Activated CD4-positive, alpha-beta memory T cell treated with anti-CD3 and anti-CD28 coated beads for 36 hours (primary cell): ENCODE measurements at regions of chr4 and their contacts with region 1.

Region 1: GRCh38 chr4:10239982-10240654 is 123.5 kb upstream of the WDR1 start:
- DNase-seq: no peak
- H3K4me3 Mint-ChIP-seq: no peak overlapping the region
- H3K27ac Mint-ChIP-seq: no peak overlapping the region
- H3K4me1 Mint-ChIP-seq: no peaks in the 10 kb centered on the region
- H3K27me3 Mint-ChIP-seq: no peaks in the 10 kb centered on the region

Region 2: DNA sequence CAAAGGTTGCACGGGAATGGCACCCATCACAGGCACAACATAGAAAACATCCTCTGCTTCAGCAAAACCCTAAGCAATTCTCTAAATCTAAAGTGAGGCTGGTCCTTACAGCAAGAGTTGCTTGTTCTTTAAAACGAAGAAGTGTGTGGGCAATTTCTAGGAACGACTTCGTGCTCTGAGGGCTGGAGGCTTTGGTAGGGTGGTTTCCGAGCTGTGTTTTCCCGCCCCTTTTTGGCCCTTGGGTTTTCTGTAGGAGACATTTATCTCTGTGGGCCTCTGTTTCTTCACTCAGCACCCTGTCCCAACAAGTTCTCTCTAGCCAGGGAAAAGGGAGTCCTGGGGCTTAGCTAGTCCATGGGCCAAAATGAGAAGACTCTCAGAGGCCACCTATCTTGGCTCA is 303.0 kb before region 1 on chr4:
- CTCF ChIA-PET with region 1: no interaction called
- POLR2A ChIA-PET with region 1: no interaction called
- intact Hi-C with region 1: no loop called
- DNase-seq: peak; percentile 12
- H3K4me3 Mint-ChIP-seq: no peak overlapping the region
- H3K27ac Mint-ChIP-seq: peak overlapping the region; percentile 11
- H3K4me1 Mint-ChIP-seq: no peaks in the 10 kb centered on the region
- H3K27me3 Mint-ChIP-seq: no peaks in the 10 kb centered on the region

Region 3: DNA sequence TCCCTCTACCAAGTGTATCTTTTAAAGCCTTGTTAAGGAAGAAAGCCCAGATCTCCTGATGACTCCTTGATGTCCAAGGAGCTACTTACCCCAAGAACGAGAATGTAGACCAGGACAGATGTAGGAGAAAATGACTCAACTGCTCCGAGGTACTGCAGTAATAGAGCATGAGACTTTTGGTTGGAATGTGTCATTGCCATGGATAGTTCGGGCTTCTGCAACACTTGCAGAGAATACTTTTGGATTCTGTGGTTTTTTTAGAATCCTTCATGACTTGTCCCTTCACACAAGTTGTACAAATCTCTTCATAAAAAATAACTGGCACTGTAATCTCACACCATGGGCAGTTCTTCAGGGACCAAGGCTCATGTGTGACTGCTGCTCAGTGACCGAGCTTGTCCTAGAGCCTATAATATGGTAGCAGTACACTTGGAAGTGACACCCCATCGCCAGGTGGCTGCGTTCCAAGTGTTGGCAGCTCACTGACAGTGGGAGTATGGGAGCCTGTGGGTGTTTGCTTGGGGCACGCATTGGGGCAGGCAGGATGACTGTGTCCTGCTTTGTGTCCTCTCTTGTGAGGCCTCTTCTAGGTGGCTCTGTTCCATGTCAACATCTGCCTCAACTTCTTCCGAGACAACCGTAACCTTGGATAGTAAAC is 35.6 kb before region 1 on chr4:
- CTCF ChIA-PET with region 1: no interaction called
- POLR2A ChIA-PET with region 1: no interaction called
- intact Hi-C with region 1: loop called (anchors 5 kb)
- DNase-seq: no peak
- H3K4me3 Mint-ChIP-seq: no peak overlapping the region
- H3K27ac Mint-ChIP-seq: no peak overlapping the region
- H3K4me1 Mint-ChIP-seq: no peaks in the 10 kb centered on the region
- H3K27me3 Mint-ChIP-seq: peaks cover 1% of the 10 kb centered on the region